HEK293 (cell line): ENCODE measurements at regions of chr4 and their contacts with region 1.

Region 1: GRCh38 chr4:1222938-1223690 is 25.8 kb downstream of the CTBP1 start:
- H3K4me3 ChIP-seq: no peak overlapping the region
- H3K27ac ChIP-seq: no peak overlapping the region
- H3K4me1 ChIP-seq: no peaks in the 10 kb centered on the region
- CTCF ChIP-seq: no peak

Region 2: DNA sequence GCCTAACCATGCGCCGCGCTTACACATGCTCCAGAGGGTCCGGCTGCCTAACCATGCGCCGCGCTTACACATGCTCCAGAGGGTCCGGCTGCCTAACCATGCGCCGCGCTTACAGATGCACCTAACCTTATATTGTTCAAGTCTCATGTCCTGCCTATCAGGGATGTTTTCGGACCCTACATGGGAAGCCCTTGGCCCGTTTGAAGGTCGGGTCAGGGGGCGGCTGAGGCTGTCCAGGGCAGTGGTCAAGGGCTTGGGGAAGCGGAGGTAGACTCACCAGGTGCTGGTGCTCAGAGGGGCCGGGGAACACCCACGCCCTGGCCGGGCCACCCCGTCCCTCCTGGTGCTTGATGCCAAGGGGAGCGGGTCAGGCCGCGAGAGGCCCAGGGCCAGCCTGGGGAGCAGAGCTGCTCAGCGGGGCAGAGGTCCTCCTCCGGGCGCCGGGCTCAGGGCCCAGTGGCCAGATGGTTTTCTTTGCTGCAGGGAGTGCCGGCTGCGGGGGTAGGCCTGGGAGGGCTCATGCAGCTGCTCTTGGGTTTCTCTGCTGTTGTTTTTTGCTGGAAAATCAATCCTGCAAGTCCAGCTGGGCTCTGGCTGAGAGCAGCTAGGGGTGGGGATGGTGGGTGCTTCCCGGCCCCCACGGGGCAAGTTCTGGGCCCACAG is 15.4 kb before region 1 on chr4:
- CTCF ChIA-PET with region 1: no interaction called
- POLR2A ChIA-PET with region 1: interaction called, 10 read pairs
- H3K4me3 ChIP-seq: no peak overlapping the region
- H3K27ac ChIP-seq: no peak overlapping the region
- H3K4me1 ChIP-seq: no peaks in the 10 kb centered on the region
- CTCF ChIP-seq: no peak